ENCODE measurements at regions of chr7 and their contacts with region 1.

Region 1: DNA sequence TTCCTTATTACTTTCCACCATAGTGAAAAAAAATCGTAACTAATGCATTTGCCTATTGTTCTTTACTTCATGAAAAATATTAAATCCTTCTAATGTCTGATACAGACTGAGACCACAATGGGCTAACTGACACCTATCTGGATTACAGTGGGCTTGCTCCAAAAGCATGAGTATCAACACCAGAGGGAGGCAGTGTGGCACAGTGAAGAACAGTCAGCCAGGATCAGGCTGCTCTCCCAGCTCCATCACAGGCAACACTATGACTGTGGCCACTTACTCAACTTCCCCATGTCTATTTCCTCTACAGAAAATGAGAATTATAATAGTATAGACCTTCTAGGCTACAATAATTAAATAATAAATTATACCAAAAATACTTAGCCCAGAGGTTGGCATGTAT is 97.2 kb downstream of the SLC25A13 start:
- DNase-seq: no peak
- ATAC-seq: peak in 1 of 8 donors; percentile 34
- H3K4me3 ChIP-seq: no peak overlapping the region
- H3K27ac ChIP-seq: no peak overlapping the region
- H3K4me1 ChIP-seq: peaks cover 0 to 6% (median 0%) of the 10 kb centered on the region in 9 donors
- H3K27me3 ChIP-seq: no peaks in the 10 kb centered on the region
- CTCF ChIP-seq: peak in 5 of 9 donors; percentile 9 to 34 (median 18)

Region 2: GRCh38 chr7:95169678-95170077 is 1055.0 kb before region 1 on chr7:
- intact Hi-C with region 1: loop called in 1 of 10 experiments (anchors 5 kb)
- DNase-seq: no peak
- ATAC-seq: no peak
- H3K4me3 ChIP-seq: no peak overlapping the region
- H3K27ac ChIP-seq: no peak overlapping the region
- H3K4me1 ChIP-seq: no peaks in the 10 kb centered on the region
- H3K27me3 ChIP-seq: no peaks in the 10 kb centered on the region
- CTCF ChIP-seq: no peak

Region 3: GRCh38 chr7:96199421-96199820 is 25.3 kb before region 1 on chr7:
- intact Hi-C with region 1: no loop called
- DNase-seq: no peak
- ATAC-seq: peak in 4 of 8 donors; percentile 41 to 59 (median 46)
- H3K4me3 ChIP-seq: no peak overlapping the region
- H3K27ac ChIP-seq: no peak overlapping the region
- H3K4me1 ChIP-seq: peaks cover 0 to 11% (median 0%) of the 10 kb centered on the region in 9 donors
- H3K27me3 ChIP-seq: no peaks in the 10 kb centered on the region
- CTCF ChIP-seq: no peak

Measured in heart right ventricle (tissue), 16 donors.